ENCODE measurements at regions of chr12 and their contacts with region 1.

Region 1: DNA sequence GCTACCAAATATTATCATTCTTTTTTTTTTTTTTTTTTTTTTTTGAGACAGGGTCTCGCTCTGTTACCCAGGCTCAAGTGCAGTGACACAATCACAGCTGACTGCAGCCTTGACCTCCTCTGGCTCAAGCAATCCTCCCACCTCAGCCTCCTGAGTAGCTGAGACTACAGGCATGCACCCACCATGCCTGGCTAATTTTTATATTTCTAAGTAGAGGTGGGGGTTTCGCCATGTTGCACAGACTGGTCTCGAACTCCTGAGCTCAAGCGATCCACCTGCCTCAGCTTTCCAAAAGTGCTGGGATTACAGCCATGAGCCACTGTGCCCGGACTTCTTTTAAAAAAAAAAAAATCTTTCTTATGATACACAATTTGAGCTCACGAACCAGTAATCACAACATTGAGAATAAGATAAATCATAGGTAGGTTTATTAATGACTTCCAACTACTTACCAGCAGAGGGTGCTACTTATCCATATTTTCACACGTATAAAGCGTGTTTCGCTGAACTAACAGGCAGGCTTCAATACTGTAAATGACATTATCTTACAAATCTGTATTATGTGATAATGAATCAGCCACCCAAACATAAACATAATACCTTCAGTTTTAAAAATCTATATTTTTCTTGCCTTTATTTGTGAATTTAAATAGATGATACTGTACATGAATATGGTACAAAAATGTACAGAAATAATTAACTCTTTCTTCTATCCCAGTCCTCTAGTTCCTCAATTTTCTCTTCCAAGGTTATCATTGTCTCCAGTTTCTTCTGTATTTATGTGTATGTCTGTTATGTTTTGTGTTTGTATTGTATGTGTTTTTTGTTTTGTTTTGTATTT is 42.5 kb upstream of the BCAT1 start:
- DNase-seq: no peak
- ATAC-seq: peak; percentile 68 to 77 (median 75)
- H3K4me3 ChIP-seq: no peak overlapping the region
- H3K27ac ChIP-seq: no peak overlapping the region
- H3K4me1 ChIP-seq: no peaks in the 10 kb centered on the region
- H3K27me3 ChIP-seq: peaks cover 0 to 5% (median 0%) of the 10 kb centered on the region in 9 donors
- CTCF ChIP-seq: peak; percentile 45 to 76 (median 64)
- POLR2A ChIP-seq: no peak

Region 2: DNA sequence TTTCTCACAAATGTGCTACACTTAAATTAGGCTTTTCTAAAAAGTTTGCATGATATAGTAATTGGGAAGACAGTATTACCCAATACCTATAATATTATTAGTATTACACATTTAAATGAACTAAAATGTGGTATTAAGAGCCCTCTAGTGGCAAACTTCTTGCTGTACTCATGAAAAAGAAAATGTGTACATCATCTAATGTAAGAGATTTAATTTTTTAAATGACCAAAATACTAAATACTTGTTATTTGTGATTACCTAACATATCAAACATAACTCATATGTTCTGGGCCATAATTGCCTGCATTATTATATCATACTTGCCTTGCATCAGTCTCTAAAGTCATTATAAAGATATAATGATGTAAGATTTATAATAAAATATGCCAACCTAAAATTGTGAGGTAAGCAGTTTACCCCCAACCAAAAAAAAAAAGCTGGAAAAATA is 139.3 kb after region 1 on chr12:
- intact Hi-C with region 1: loop called (anchors 1 to 5 kb)
- DNase-seq: no peak
- ATAC-seq: no peak
- H3K4me3 ChIP-seq: no peak overlapping the region
- H3K27ac ChIP-seq: no peak overlapping the region
- H3K4me1 ChIP-seq: no peaks in the 10 kb centered on the region
- H3K27me3 ChIP-seq: no peaks in the 10 kb centered on the region
- CTCF ChIP-seq: peak; percentile 58 to 80 (median 73)
- POLR2A ChIP-seq: no peak

Region 3: DNA sequence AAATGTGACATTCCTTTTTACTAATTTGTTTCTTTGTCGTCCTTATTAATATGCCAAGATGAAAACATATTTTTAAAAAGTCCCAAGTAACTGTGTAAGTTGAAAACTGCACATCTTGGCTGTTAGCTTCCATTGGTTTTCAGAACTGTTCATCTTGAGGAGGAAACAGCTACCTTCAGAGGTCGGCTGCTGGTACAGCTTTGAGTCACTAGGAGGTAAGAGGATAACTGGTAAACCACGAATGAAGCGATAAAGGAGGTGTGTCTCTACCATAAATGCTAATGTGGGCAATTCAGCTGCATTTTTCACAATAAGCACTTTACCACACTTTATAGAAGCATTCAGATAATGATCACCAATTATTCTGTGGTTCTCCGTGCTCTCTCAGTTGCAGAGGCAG is 396.8 kb after region 1 on chr12:
- intact Hi-C with region 1: loop called in 2 of 10 experiments (anchors 2 to 10 kb)
- DNase-seq: no peak
- ATAC-seq: no peak
- H3K4me3 ChIP-seq: no peak overlapping the region
- H3K27ac ChIP-seq: no peak overlapping the region
- H3K4me1 ChIP-seq: peaks cover 0 to 16% (median 6%) of the 10 kb centered on the region in 12 donors
- H3K27me3 ChIP-seq: no peaks in the 10 kb centered on the region
- CTCF ChIP-seq: no peak
- POLR2A ChIP-seq: no peak

Region 4: DNA sequence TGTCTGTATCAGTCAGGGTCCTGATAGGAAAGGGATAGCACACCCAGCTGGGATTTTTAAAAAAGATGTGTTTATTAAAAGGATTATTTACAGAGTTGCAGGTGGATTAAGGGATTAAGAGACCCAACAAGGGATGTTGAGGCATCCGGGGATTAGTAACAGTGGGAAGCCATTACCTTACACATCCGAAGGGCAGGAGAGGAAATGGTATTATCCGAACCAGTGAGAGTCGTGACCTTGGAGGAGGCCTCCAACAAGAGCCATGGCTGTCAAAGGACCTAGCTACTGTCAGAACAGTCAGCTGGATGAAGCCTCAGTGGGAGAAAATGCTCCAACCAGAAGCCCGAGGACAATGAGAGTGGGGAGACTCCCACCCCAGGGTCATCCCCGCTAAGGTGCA is 405.6 kb after region 1 on chr12:
- intact Hi-C with region 1: loop called in 1 of 10 experiments (anchors 10 kb)
- DNase-seq: no peak
- ATAC-seq: no peak
- H3K4me3 ChIP-seq: no peak overlapping the region
- H3K27ac ChIP-seq: no peak overlapping the region
- H3K4me1 ChIP-seq: no peaks in the 10 kb centered on the region
- H3K27me3 ChIP-seq: no peaks in the 10 kb centered on the region
- CTCF ChIP-seq: no peak
- POLR2A ChIP-seq: no peak